CD8-positive, alpha-beta T cell (primary cell): ENCODE measurements at regions of chr13 and their contacts with region 1.

Region 1: DNA sequence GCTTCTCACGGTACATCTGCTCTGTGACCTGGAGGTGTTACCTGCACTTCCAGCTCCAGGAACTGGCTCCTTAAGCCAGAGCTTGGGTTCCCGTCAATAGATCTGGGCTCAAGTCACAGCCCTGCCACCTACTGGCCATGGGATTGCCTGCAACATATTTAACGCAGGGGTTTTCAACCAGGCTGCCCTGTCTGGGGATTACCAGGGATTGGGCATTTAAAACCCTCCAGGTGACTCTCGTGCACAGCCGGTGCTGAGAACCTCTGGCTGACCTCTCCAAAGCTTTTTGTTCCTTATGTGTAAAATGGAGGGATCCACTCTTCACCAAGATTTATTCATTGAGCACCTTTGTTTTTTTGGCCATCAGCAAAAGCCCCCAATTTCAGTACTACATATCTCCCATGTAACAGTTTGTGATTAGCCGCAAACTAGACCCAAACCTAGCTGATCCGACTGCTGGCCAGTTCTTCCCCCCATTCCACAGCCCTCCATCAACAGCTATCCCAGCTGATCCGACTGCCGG is 76.6 kb upstream of the STK24 start:
- DNase-seq: peak; percentile 52 to 80 (median 72)
- ATAC-seq: peak; percentile 97
- H3K4me3 ChIP-seq: no peak overlapping the region
- H3K4me3 Mint-ChIP-seq: peak overlapping the region; percentile 78
- H3K27ac ChIP-seq: no peak overlapping the region
- H3K27ac Mint-ChIP-seq: no peak overlapping the region
- H3K4me1 ChIP-seq: peaks cover 3% of the 10 kb centered on the region
- H3K4me1 Mint-ChIP-seq: peaks cover 2% of the 10 kb centered on the region
- H3K27me3 ChIP-seq: no peaks in the 10 kb centered on the region
- H3K27me3 Mint-ChIP-seq: peaks cover 5% of the 10 kb centered on the region
- CTCF ChIP-seq: peak; percentile 78

Region 2: GRCh38 chr13:98445340-98446233 is 207.9 kb before region 1 on chr13:
- CTCF ChIA-PET with region 1: interaction called, 242 read pairs
- POLR2A ChIA-PET with region 1: interaction called, 15 read pairs
- intact Hi-C with region 1: loop called (anchors 1 kb)
- DNase-seq: peak; percentile 62 to 88 (median 81)
- ATAC-seq: peak; percentile 99
- H3K4me3 ChIP-seq: peak overlapping the region; percentile 0 to 32
- H3K4me3 Mint-ChIP-seq: peak overlapping the region; percentile 55
- H3K27ac ChIP-seq: peak overlapping the region in 1 of 2 experiments; percentile 51
- H3K27ac Mint-ChIP-seq: peak overlapping the region; percentile 92
- H3K4me1 ChIP-seq: peaks cover 18% of the 10 kb centered on the region
- H3K4me1 Mint-ChIP-seq: peaks cover 19% of the 10 kb centered on the region
- H3K27me3 ChIP-seq: no peaks in the 10 kb centered on the region
- H3K27me3 Mint-ChIP-seq: no peaks in the 10 kb centered on the region
- CTCF ChIP-seq: peak; percentile 92

Region 3: GRCh38 chr13:98466634-98467236 is 186.8 kb before region 1 on chr13:
- CTCF ChIA-PET with region 1: interaction called, 12 read pairs
- POLR2A ChIA-PET with region 1: no interaction called
- intact Hi-C with region 1: no loop called
- DNase-seq: peak in 5 of 9 experiments; percentile 31 to 47 (median 41)
- ATAC-seq: peak; percentile 66
- H3K4me3 ChIP-seq: no peak overlapping the region
- H3K4me3 Mint-ChIP-seq: no peak overlapping the region
- H3K27ac ChIP-seq: no peak overlapping the region
- H3K27ac Mint-ChIP-seq: peak overlapping the region; percentile 14
- H3K4me1 ChIP-seq: no peaks in the 10 kb centered on the region
- H3K4me1 Mint-ChIP-seq: peaks cover 12% of the 10 kb centered on the region
- H3K27me3 ChIP-seq: no peaks in the 10 kb centered on the region
- H3K27me3 Mint-ChIP-seq: no peaks in the 10 kb centered on the region
- CTCF ChIP-seq: no peak

Region 4: GRCh38 chr13:98484289-98485219 is 169.0 kb before region 1 on chr13:
- CTCF ChIA-PET with region 1: interaction called, 27 read pairs
- POLR2A ChIA-PET with region 1: no interaction called
- intact Hi-C with region 1: no loop called
- DNase-seq: peak; percentile 24 to 79 (median 57)
- ATAC-seq: peak; percentile 77
- H3K4me3 ChIP-seq: no peak overlapping the region
- H3K4me3 Mint-ChIP-seq: peak overlapping the region; percentile 53
- H3K27ac ChIP-seq: no peak overlapping the region
- H3K27ac Mint-ChIP-seq: peak overlapping the region; percentile 81
- H3K4me1 ChIP-seq: peaks cover 24% of the 10 kb centered on the region
- H3K4me1 Mint-ChIP-seq: peaks cover 79% of the 10 kb centered on the region
- H3K27me3 ChIP-seq: no peaks in the 10 kb centered on the region
- H3K27me3 Mint-ChIP-seq: no peaks in the 10 kb centered on the region
- CTCF ChIP-seq: no peak

Region 5: DNA sequence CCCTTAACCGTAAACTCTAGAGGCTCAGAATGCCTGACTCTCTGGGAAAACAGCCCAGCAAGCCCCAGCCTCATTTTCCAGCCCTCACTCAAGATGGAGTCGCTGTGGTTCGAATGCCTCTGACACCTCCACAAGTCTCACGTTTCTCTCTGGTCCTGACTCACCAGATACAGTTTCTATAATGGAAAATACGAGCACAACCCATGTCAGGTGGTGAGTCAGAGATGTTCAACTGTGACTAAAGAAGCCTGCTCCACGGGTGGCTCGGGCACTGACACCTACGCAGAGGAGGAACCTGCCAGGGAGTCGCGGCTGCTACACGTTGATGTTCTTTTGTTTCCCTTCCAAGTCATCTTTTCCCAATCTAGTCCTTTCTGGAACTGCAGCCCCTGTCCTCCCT is 10.5 kb after region 1 on chr13:
- CTCF ChIA-PET with region 1: interaction called, 15 read pairs
- POLR2A ChIA-PET with region 1: no interaction called
- intact Hi-C with region 1: no loop called
- DNase-seq: no peak
- ATAC-seq: no peak
- H3K4me3 ChIP-seq: no peak overlapping the region
- H3K4me3 Mint-ChIP-seq: no peak overlapping the region
- H3K27ac ChIP-seq: no peak overlapping the region
- H3K27ac Mint-ChIP-seq: no peak overlapping the region
- H3K4me1 ChIP-seq: no peaks in the 10 kb centered on the region
- H3K4me1 Mint-ChIP-seq: no peaks in the 10 kb centered on the region
- H3K27me3 ChIP-seq: no peaks in the 10 kb centered on the region
- H3K27me3 Mint-ChIP-seq: no peaks in the 10 kb centered on the region
- CTCF ChIP-seq: no peak

Region 6: DNA sequence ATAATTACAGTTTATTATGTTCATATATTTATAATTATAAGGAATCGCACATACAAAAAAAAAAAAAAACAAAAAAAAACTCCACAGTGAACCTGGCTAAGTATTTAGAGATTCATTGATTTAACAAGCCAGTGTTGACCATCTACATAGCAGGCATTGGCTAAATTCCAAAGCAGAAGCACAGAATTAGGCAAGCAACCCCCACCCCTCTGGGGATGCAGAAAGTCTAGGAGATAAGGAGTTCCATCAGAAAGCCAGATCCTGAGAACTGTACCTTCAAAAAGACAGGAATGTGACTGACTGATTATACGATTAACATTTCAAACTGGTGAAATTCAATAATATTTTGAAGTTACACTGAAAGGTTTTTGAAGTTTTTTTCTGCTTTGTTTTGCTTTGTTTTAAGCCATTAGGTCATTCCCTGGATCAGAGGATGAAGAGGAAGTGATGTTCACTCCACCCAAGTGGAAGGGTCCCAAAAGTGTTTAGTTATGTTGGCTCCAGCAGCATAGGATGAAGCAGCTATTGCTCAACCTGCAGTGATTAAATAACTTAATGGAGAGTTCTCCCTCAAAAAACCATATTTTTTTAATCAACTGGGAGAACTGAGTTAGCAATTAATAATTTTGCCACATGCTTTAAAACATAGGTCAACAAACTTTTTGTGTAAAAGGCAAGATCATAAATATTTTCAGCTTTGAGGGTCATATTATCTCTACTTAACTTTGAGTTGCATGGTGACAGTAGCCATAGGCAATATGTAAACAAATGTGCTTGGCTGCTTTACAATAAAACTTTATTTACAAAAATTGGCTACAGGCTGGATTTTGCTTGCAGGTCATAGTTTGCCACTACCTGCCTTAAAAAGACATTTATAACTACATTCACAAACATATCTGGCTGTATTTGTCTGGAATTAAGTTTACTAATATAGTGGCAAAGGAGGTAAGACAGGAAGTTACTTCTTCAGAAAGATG is 274.7 kb after region 1 on chr13:
- CTCF ChIA-PET with region 1: no interaction called
- POLR2A ChIA-PET with region 1: no interaction called
- intact Hi-C with region 1: no loop called
- DNase-seq: no peak
- ATAC-seq: no peak
- H3K4me3 ChIP-seq: no peak overlapping the region
- H3K4me3 Mint-ChIP-seq: no peak overlapping the region
- H3K27ac ChIP-seq: no peak overlapping the region
- H3K27ac Mint-ChIP-seq: no peak overlapping the region
- H3K4me1 ChIP-seq: peaks cover 4% of the 10 kb centered on the region
- H3K4me1 Mint-ChIP-seq: peaks cover 13% of the 10 kb centered on the region
- H3K27me3 ChIP-seq: no peaks in the 10 kb centered on the region
- H3K27me3 Mint-ChIP-seq: no peaks in the 10 kb centered on the region
- CTCF ChIP-seq: no peak